Caki2 (cell line): ENCODE measurements at regions of chr12 and their contacts with region 1.

Region 1: DNA sequence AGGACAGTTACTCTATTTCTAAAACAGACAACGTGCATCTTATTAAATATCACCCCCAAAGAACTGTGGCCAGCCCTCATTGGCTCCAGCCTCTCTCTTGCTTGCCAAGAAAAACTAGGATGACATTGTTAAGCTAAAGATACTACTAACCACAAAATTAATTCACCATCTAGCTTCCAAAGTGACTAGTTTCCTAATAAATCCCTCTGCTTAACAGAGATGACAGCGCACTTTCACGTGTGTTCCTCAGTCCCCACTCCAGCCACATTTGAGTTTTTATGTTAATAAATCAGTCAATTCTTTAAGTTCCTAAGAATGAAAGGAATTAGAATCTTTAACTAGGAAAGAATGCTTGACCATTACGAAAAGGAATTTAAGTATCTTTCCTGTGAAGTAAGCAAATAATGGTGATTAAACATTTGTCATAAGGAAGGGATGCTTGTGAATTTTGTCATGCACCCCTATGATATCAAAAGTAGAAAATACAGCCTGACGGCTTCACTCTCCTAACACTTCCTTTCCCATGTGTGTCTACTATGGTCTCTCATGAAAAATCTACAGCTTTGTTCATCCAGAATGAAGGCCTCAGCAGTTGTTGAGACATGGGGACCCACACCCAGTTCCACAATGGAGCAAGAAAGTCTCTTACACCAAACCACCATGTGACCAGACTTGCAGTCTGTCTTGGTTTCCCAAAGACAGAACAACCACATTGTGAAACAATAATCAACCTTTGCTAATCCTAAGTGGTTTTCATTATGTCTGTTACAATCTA is 8.1 kb downstream of the CORO1C start:
- DNase-seq: peak; percentile 88

Region 2: DNA sequence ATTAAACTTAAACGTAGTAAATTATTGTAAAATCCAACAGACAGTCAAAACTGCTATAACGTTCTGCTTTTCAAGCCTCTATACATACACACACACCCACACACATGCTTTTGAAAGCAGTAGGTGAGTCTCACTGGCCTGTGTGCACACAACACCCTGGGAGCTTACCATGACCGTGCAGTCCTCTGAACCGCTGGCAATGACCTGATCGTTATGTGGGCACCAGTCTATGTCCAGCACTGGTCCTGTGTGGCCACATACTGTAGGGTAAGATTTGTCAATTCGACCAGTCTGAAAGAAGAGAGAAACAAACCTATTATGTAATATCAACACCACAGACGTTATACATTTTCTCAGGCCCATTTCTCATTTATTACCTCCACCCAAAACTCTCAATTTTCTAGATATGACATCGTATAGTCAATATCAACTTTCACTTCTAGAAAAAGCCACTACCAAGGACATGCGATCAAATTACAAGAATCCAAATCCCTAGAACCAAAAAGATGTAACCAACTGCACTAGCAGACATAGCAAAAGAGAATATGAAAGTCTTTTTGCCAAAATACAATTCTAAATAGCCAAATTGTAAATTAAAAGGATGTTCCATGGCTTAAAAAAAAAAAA is 45.0 kb before region 1 on chr12:
- in situ Hi-C with region 1: loop called (anchors 10 kb)
- DNase-seq: no peak